Dendritic cell treated with granulocyte-macrophage colony-stimulating factor and Interleukin-4, amounts not matched to agents 40 ng/mL and 50 ng/mL, for 4 days (primary cell): ENCODE measurements at regions of chr10 and their contacts with region 1.

Region 1: DNA sequence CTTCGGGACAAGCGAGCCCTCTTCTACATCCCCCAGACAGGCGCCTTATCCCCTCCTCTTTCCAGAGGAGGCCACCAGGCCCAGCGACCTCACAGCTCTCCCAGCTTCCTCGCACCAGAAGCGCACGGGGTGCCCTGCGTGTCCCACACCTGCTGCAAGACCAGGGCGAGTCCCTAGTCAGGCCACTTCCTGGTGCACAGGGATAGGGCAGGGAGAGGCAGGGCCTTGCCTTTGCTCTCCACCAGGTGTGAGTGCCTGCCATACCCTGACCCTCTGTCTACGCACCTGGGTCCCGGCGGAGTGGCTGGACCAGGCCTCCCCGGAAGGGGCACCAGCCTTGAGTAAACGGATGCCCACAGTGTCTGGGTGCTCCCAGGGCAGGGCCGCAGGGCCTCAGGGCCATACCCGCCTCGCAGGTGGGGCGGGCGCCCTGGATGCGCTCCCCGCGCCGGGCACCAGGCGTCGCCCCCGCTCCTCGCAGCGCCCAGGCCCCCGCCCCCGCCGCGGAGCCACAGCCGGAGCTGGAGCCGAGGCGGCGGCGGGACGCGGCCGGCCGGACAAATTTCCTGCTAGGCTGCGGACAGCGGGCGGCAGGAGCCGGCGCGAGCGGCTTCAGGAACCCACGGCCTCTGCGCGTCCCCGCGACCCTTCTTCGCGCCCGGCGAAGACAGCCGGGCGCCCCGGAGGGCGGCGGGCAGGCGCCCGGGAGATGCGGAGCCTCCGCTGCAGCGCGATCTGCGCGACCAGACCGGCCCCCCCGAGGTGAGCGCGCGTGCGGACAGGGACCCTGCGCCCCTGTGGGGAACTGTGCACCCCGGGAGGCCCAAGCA is at the start of gene PTPRE:
- H3K4me3 Mint-ChIP-seq: peak within 1 kb of the TSS; percentile 69
- H3K27ac Mint-ChIP-seq: peak within 1 kb of the TSS; percentile 6
- H3K4me1 Mint-ChIP-seq: peaks cover 48% of the 10 kb centered on the region
- H3K27me3 Mint-ChIP-seq: peaks cover 5% of the 10 kb centered on the region

Region 2: GRCh38 chr10:127872871-127873600 is 33.7 kb before region 1 on chr10:
- intact Hi-C with region 1: loop called (anchors 5 kb)
- H3K4me3 Mint-ChIP-seq: no peak overlapping the region
- H3K27ac Mint-ChIP-seq: no peak overlapping the region
- H3K4me1 Mint-ChIP-seq: peaks cover 42% of the 10 kb centered on the region
- H3K27me3 Mint-ChIP-seq: peaks cover 3% of the 10 kb centered on the region

Region 3: GRCh38 chr10:127945335-127945734 is 38.6 kb after region 1 on chr10:
- intact Hi-C with region 1: no loop called
- H3K4me3 Mint-ChIP-seq: no peak overlapping the region
- H3K27ac Mint-ChIP-seq: no peak overlapping the region
- H3K4me1 Mint-ChIP-seq: peaks cover 65% of the 10 kb centered on the region
- H3K27me3 Mint-ChIP-seq: no peaks in the 10 kb centered on the region

Region 4: DNA sequence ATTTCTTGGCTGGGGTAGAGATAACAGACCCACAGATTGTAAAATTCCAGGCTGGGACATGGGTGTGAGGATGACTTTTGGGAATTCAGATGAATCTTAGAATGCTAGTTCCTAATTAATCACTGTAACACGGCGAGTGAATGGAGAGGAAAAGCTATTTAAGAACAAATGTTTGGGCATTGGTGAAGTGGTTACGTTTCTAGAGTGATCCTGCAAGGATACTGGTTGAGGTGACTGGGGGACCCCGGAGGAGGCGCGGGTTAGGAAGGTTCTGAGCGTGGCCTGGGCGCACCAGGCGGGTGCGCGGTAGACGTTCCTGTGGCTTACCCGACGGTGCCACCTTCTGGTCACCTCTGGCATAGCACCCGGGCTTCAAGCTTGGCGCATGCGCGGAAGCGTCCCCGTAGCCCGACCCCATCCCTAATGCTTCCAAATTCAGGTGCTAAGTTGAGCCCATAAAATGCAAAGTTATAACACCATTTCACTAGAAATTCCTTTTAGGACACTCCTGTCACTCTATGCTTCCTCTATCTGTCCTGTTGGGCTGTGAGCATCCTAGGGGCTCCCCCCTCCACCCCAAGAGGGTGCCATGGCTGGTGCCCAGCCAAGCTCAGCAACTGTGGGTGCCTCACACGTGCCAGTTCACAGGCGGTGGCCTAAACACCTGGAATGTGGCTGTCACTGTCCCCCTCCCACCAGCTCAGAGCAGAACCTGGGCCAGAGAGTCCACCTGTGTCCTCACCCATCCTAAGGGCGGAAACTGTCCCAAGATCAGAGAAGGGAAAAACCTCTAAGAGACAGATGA is 104.6 kb after region 1 on chr10:
- intact Hi-C with region 1: loop called (anchors 1 kb)
- H3K4me3 Mint-ChIP-seq: peak overlapping the region; percentile 58
- H3K27ac Mint-ChIP-seq: peak overlapping the region; percentile 26
- H3K4me1 Mint-ChIP-seq: peaks cover 20% of the 10 kb centered on the region
- H3K27me3 Mint-ChIP-seq: no peaks in the 10 kb centered on the region

Region 5: GRCh38 chr10:128069351-128070051 is 162.7 kb after region 1 on chr10:
- intact Hi-C with region 1: loop called (anchors 1 kb)
- H3K4me3 Mint-ChIP-seq: no peak overlapping the region
- H3K27ac Mint-ChIP-seq: peak overlapping the region; percentile 86
- H3K4me1 Mint-ChIP-seq: peaks cover 87% of the 10 kb centered on the region
- H3K27me3 Mint-ChIP-seq: no peaks in the 10 kb centered on the region

Region 6: GRCh38 chr10:128150045-128150493 is 243.3 kb after region 1 on chr10:
- intact Hi-C with region 1: loop called (anchors 5 kb)
- H3K4me3 Mint-ChIP-seq: peak overlapping the region; percentile 80
- H3K27ac Mint-ChIP-seq: no peak overlapping the region
- H3K4me1 Mint-ChIP-seq: peaks cover 10% of the 10 kb centered on the region
- H3K27me3 Mint-ChIP-seq: peaks cover 54% of the 10 kb centered on the region